GM12878 (cell line): ENCODE measurements at regions of chr7 and their contacts with region 1.

Region 1: GRCh38 chr7:33109005-33109757 is at the start of gene RP9:
- DNase-seq: no peak
- ATAC-seq: peak; percentile 89
- H3K4me3 ChIP-seq: peak within 1 kb of the TSS; percentile 96
- H3K27ac ChIP-seq: peak within 1 kb of the TSS; percentile 45
- H3K4me1 ChIP-seq: peaks cover 11% of the 10 kb centered on the region; the same call in 1 of the 2 replicates
- H3K27me3 ChIP-seq: no peaks in the 10 kb centered on the region; a peak in 1 of 4 replicates
- CTCF ChIP-seq: peak; percentile 36 to 65 (median 52); a peak in 4 of 6 replicates
- EP300 ChIP-seq: no peak
- POLR2A ChIP-seq: peak; percentile 89
- RAD21 ChIP-seq: peak; percentile 34
- polyA plus RNA-seq, gene RP9: 7.6 to 9.6 TPM

Region 2: DNA sequence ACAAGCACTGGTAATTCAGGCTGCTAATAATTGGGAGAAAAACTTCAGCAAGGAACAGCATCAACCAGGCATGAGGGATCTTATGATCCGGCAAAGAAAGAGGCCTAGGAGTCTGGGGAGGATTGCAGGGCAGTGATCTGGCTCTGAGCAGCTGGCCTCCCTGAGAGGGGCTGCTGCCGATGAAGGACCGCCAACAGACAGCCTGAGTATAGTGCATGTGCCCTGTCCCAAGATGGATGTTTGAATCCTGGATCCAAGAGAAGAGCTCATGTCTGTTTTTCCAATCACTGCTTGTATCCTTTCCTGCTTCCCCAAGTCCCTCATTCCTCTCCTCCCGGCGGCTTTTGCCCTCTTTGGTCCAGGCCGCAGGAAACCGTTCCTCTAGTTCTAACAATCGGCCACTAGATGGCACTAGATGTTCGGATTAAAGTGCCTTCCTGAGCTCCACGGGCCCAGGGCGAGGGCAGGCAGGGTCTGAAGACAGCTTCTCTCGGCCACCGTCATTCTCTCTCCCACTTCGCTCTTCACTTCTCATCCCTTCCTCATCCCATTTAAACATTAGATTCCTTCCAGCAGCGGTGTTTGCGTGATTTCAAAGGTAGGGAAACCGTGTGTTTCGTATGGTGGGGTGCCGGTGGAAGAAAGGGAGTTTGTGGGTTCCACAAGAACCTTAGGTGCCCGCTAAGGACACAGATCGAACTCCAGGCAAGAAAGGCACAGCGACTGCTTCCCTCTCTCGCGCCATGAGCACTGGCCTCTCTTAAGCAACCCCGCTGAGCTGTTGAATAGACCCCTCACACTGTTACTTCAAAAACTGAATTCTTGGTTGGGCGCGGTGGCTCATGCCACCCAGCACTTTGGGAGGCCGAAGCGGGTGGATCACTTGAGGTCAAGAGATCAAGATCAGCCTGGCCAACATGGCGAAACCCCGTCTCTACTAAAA is 1974.7 kb before region 1 on chr7:
- CTCF ChIA-PET with region 1: no interaction called
- POLR2A ChIA-PET with region 1: no interaction called
- RAD21 ChIA-PET with region 1: no interaction called
- SMC1A ChIA-PET with region 1: no interaction called
- in situ Hi-C with region 1: no loop called
- intact Hi-C with region 1: no loop called
- DNase-seq: no peak
- ATAC-seq: peak; percentile 97
- H3K4me3 ChIP-seq: no peak overlapping the region
- H3K27ac ChIP-seq: no peak overlapping the region
- H3K4me1 ChIP-seq: no peaks in the 10 kb centered on the region
- H3K27me3 ChIP-seq: no peaks in the 10 kb centered on the region
- CTCF ChIP-seq: peak; percentile 61 to 75 (median 63)
- EP300 ChIP-seq: no peak
- POLR2A ChIP-seq: no peak
- RAD21 ChIP-seq: peak; percentile 80

Region 3: DNA sequence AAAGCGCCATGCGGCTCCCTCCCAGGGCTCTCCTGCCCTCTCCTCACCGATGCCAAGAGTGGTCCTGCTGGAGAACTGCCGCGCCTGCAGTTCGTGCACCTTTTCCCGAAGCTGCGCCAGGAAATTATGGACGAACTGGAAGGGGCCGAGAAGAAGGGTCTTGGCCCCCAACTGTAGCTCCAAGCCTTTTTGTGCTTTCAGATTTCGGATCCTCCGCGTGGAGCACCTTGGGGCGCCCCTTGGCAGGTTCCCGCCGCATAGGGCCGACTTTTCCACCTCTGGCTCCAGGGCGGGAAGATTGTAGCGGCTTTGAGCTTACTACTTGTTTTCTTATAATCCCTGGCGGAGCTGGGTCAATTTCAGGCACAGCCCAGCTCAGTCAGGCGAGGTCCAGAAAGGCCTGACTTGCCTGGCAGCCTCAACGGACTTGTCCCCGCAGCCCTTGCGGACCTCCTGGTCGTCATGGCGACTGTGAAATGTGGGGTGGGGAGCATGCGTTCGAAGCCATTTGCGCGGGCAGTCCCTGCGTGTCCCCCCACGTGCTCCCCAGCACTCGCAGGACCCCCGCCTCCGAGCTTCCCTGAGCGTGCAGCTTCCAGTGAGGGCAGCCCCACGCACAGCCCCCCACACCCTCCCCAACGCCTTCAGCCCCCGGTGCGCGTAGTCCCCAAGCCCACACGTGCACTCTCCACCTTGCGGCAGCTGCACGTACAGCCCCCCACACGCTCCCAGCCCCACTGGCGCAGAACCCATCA is 347.6 kb before region 1 on chr7:
- CTCF ChIA-PET with region 1: interaction called, 8 read pairs
- POLR2A ChIA-PET with region 1: no interaction called
- RAD21 ChIA-PET with region 1: interaction called, 8 read pairs
- SMC1A ChIA-PET with region 1: interaction called, 10 read pairs
- in situ Hi-C with region 1: no loop called
- intact Hi-C with region 1: loop called (anchors 10 kb)
- DNase-seq: no peak
- ATAC-seq: no peak
- H3K4me3 ChIP-seq: no peak overlapping the region
- H3K27ac ChIP-seq: no peak overlapping the region
- H3K4me1 ChIP-seq: no peaks in the 10 kb centered on the region
- H3K27me3 ChIP-seq: no peaks in the 10 kb centered on the region; a peak in 1 of 4 replicates
- CTCF ChIP-seq: no peak
- EP300 ChIP-seq: no peak
- POLR2A ChIP-seq: no peak
- RAD21 ChIP-seq: no peak

Region 4: DNA sequence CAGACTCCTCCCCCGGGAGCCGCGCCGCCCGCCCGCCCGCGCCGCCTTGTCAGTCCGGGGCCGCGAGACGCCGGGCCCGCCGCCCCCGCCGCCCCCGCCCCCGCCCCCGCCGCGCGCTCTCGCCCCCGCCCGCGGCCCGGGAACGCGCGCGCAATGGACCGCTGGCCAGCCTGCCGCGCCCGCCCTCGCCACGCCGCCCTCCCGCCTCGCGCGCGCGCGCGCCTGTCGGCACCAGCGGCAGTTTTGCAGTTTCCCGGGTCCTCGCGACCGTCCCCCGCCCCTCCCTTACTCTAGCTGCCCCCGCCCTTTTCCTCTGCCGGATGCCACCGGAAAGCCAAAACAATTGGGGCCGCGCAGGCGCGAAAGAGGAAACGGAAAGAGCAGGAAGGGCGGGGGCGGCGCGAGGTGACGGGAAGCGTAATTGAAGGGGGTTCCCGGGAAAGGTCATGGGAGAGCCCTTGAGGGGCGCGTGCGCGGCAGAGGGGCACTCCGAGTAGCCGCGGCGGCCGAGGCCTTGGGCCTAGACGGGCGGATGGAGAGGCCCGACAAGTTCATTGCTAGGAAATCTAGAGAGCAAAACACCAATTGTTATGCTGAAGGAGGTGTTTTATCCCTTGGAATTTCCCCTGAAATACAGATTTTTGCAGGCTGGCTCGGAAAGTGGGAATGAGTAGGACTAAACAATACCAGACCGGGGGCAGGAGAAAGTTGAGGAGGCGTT is 217.2 kb before region 1 on chr7:
- CTCF ChIA-PET with region 1: interaction called, 8 read pairs
- POLR2A ChIA-PET with region 1: no interaction called
- RAD21 ChIA-PET with region 1: interaction called, 15 read pairs
- SMC1A ChIA-PET with region 1: interaction called, 6 read pairs
- in situ Hi-C with region 1: no loop called
- intact Hi-C with region 1: loop called (anchors 5 kb)
- DNase-seq: peak; percentile 84
- ATAC-seq: peak; percentile 82
- H3K4me3 ChIP-seq: peak overlapping the region; percentile 62
- H3K27ac ChIP-seq: peak overlapping the region; percentile 99
- H3K4me1 ChIP-seq: peaks cover 10% of the 10 kb centered on the region; the same call in 1 of the 2 replicates
- H3K27me3 ChIP-seq: no peaks in the 10 kb centered on the region
- CTCF ChIP-seq: no peak
- EP300 ChIP-seq: no peak
- POLR2A ChIP-seq: peak; percentile 47
- RAD21 ChIP-seq: no peak

Region 5: GRCh38 chr7:33040803-33041516 is 68.2 kb before region 1 on chr7:
- CTCF ChIA-PET with region 1: interaction called, 24 read pairs
- POLR2A ChIA-PET with region 1: interaction called, 6 read pairs
- RAD21 ChIA-PET with region 1: interaction called, 14 read pairs
- SMC1A ChIA-PET with region 1: interaction called, 17 read pairs
- in situ Hi-C with region 1: no loop called
- intact Hi-C with region 1: no loop called
- DNase-seq: peak; percentile 89
- ATAC-seq: peak; percentile 93
- H3K4me3 ChIP-seq: peak overlapping the region; percentile 77
- H3K27ac ChIP-seq: peak overlapping the region; percentile 71; the same call in 1 of the 2 replicates
- H3K4me1 ChIP-seq: peaks cover 5% of the 10 kb centered on the region; the same call in 1 of the 2 replicates
- H3K27me3 ChIP-seq: no peaks in the 10 kb centered on the region
- CTCF ChIP-seq: no peak
- EP300 ChIP-seq: 0 out of 4 replicates have a peak, but pooled peaks of 1 of the 2 experiments have one; percentile 15
- POLR2A ChIP-seq: peak; percentile 88
- RAD21 ChIP-seq: no peak

Region 6: GRCh38 chr7:33062782-33063443 is 46.3 kb before region 1 on chr7:
- CTCF ChIA-PET with region 1: interaction called, 31 read pairs
- POLR2A ChIA-PET with region 1: interaction called, 11 read pairs
- RAD21 ChIA-PET with region 1: interaction called, 19 read pairs
- SMC1A ChIA-PET with region 1: interaction called, 19 read pairs
- in situ Hi-C with region 1: no loop called
- intact Hi-C with region 1: loop called (anchors 2 kb)
- DNase-seq: peak; percentile 81
- ATAC-seq: peak; percentile 95
- H3K4me3 ChIP-seq: peak overlapping the region; percentile 93
- H3K27ac ChIP-seq: peak overlapping the region; percentile 89
- H3K4me1 ChIP-seq: peaks cover 3% of the 10 kb centered on the region; the same call in 1 of the 2 replicates
- H3K27me3 ChIP-seq: no peaks in the 10 kb centered on the region
- CTCF ChIP-seq: no peak
- EP300 ChIP-seq: no peak
- POLR2A ChIP-seq: peak; percentile 75
- RAD21 ChIP-seq: no peak

Region 7: GRCh38 chr7:33157311-33157710 is 48.1 kb after region 1 on chr7:
- CTCF ChIA-PET with region 1: no interaction called
- POLR2A ChIA-PET with region 1: no interaction called
- RAD21 ChIA-PET with region 1: no interaction called
- SMC1A ChIA-PET with region 1: no interaction called
- in situ Hi-C with region 1: no loop called
- intact Hi-C with region 1: no loop called
- DNase-seq: no peak
- ATAC-seq: no peak
- H3K4me3 ChIP-seq: no peak overlapping the region
- H3K27ac ChIP-seq: no peak overlapping the region
- H3K4me1 ChIP-seq: no peaks in the 10 kb centered on the region
- H3K27me3 ChIP-seq: no peaks in the 10 kb centered on the region
- CTCF ChIP-seq: no peak
- EP300 ChIP-seq: no peak
- POLR2A ChIP-seq: no peak
- RAD21 ChIP-seq: no peak